ENCODE measurements at regions of chr1 and their contacts with region 1.

Region 1: GRCh38 chr1:3564921-3565827 is 46.1 kb downstream of the MEGF6 start:
- DNase-seq: no peak
- H3K4me3 ChIP-seq: no peak overlapping the region
- H3K27ac ChIP-seq: no peak overlapping the region
- H3K4me1 ChIP-seq: no peaks in the 10 kb centered on the region
- H3K27me3 ChIP-seq: no peaks in the 10 kb centered on the region
- CTCF ChIP-seq: peak; percentile 85 to 93

Region 2: DNA sequence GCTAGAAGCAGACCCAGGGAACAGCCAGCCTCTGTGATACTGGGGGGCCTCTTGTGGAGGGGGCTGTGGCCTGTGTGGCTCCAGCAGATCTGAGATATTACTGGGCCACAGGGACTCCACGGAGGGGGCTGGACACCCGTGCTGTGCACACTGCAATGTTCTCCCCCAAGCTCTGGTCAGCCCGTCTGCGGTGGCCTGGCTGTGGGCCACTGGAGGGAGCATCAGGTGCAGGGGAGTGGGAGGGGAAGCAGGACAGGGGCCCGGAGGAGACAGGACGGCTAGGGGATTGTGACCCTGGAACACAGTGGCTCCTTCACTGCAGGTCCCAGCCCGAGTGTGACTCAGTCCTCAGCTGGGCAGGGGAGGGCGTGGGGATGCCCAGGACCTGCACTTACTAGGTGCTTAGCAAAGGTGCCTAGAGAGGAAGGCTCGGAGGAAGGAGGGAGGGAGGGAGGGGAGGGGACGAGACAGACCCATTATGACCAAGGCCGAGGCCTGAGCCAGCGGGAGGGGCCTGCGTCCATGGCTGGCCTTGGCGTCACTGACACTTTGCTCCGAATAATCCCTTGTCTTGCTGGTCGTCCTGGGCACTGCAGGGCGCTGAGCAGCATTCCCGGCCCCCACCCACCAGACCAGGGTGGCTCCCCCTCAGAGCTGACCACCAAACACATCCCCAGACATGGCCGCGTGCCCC is 452.0 kb before region 1 on chr1:
- CTCF ChIA-PET with region 1: no interaction called
- dilution Hi-C with region 1: no loop called
- in situ Hi-C with region 1: no loop called
- intact Hi-C with region 1: no loop called
- DNase-seq: no peak
- H3K4me3 ChIP-seq: no peak overlapping the region
- H3K27ac ChIP-seq: no peak overlapping the region
- H3K4me1 ChIP-seq: no peaks in the 10 kb centered on the region
- H3K27me3 ChIP-seq: no peaks in the 10 kb centered on the region
- CTCF ChIP-seq: no peak

Region 3: DNA sequence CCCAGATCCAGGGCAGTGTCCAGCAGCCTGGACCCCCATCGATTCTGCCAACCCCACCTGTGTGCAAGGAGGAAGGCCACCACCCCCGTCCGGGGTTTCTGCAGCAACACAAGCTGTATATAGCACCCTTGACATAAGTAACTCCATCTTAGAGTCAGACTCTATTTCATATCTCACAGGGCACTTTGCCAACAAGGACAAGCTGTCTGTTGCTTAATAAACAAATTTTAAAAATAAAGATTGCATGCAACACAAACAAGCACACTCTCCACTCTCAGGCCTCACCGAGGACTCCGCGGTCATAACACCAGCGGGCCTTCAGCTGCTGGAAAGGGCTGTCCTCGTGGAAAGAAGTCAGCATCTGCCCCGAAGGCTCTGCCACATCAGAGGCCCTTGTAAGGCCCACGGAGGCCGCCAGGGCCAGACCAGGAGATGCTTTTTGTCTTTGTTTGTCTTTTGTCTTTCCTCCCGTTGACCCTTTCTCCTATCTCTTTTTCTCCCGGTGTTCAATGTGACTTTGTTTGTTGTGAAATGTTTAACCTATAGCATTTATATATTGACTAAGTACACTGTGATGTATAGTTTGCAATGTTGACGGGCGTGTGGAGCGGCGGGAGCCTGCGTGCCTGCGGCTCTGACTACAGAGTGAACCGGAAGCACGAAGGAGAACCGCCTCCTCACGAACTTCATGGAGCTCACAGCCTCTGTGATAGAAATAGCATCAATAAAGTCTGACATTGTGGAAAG is 21.9 kb after region 1 on chr1:
- CTCF ChIA-PET with region 1: no interaction called
- dilution Hi-C with region 1: no loop called
- in situ Hi-C with region 1: no loop called
- intact Hi-C with region 1: no loop called
- DNase-seq: no peak
- H3K4me3 ChIP-seq: no peak overlapping the region
- H3K27ac ChIP-seq: no peak overlapping the region
- H3K4me1 ChIP-seq: no peaks in the 10 kb centered on the region
- H3K27me3 ChIP-seq: no peaks in the 10 kb centered on the region
- CTCF ChIP-seq: no peak

Region 4: DNA sequence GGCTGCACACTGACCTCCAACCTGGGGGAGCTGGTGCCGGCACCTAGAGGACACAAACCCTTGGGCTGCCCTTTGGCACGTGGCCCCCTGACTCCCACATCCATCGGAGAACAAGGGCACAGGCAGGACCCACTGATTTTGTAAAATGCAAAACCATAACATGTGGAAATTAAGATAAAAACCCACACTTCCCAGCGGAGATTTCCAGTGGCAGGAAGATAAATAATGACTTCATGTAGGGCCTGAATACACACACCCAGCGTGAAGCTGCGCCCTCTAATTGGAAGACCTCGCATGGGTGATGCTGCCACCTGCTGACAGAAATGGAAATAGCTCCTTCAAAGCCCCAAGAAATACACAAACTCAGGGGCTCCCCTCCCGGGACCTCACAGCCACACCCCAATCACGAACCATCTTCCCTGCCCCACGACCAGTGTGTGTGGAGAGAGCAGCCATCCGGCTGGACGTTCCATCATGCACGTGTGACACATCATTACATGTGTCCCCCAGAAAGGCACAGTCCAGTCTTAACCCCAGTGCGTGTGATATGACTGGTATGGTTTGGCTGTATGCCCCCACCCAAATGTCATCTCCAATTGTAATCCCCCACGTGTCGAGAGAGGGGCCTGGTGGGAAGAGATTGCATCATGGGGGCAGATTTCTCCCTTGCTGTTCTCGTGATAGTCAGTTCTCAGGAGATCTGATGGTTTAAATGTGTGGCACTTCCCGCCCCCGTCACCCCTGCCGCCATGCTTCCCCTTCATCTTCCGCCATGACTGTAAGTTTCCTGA is 53.9 kb after region 1 on chr1:
- CTCF ChIA-PET with region 1: no interaction called
- dilution Hi-C with region 1: no loop called
- in situ Hi-C with region 1: no loop called
- intact Hi-C with region 1: loop called (anchors 1 kb)
- DNase-seq: peak; percentile 48
- H3K4me3 ChIP-seq: no peak overlapping the region
- H3K27ac ChIP-seq: no peak overlapping the region
- H3K4me1 ChIP-seq: peaks cover 9% of the 10 kb centered on the region
- H3K27me3 ChIP-seq: no peaks in the 10 kb centered on the region
- CTCF ChIP-seq: peak; percentile 70 to 80

Region 5: DNA sequence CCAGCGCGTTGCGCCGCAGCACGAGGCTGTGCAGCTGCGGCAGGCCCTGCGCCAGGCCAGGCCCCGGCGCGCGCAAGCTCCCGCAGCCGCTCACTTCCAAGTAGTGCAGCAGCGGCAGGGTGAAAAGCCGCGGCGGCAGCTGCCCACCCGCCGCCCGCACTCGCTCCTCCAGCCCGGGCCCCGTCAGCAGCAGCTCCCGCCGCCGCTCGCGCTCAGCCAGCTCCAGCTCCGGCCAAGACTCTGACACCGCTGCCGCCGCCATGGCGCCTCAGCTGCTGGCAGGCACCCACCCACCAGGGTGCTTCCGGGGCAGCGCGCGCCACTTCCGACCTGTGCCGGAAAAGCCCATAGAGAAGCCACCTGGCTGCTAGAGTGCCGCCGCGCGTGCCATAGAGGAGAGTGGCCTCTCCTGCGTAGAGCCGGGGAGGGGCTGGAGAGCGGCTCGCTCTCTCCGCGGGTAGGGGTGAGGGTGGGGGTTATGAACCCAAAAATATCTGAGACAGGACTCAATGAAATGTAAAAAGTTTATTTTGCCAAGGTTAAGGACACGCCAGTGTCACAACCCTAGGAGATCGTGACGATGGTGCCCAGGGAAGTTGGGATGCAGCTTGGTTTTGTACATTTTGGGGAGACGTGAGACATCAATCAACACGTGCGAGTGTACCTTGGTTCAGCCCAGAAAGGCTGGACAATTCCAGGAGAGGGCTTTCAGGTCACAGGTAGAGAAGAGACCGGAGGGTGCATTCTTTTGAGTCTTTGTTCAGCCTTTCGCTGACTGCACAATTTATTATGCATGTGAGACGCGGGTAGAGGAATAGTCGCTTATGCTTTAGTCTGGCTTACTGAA is 231.3 kb after region 1 on chr1 and contains the start of gene LRRC47:
- CTCF ChIA-PET with region 1: no interaction called
- dilution Hi-C with region 1: no loop called
- in situ Hi-C with region 1: no loop called
- intact Hi-C with region 1: no loop called
- DNase-seq: peak; percentile 90
- H3K4me3 ChIP-seq: peak within 1 kb of the TSS; percentile 80 to 91 (median 85)
- H3K27ac ChIP-seq: peak within 1 kb of the TSS; percentile 24
- H3K4me1 ChIP-seq: peaks cover 21% of the 10 kb centered on the region
- H3K27me3 ChIP-seq: no peaks in the 10 kb centered on the region
- CTCF ChIP-seq: no peak
- total RNA-seq, gene LRRC47: 31.2 to 40.2 TPM

Region 6: GRCh38 chr1:3821004-3821403 is 255.8 kb after region 1 on chr1:
- CTCF ChIA-PET with region 1: no interaction called
- dilution Hi-C with region 1: no loop called
- in situ Hi-C with region 1: no loop called
- intact Hi-C with region 1: no loop called
- DNase-seq: no peak
- H3K4me3 ChIP-seq: no peak overlapping the region
- H3K27ac ChIP-seq: no peak overlapping the region
- H3K4me1 ChIP-seq: peaks cover 15% of the 10 kb centered on the region
- H3K27me3 ChIP-seq: no peaks in the 10 kb centered on the region
- CTCF ChIP-seq: no peak